Caco-2 (cell line): ENCODE measurements at regions of chr20 and their contacts with region 1.

Region 1: GRCh38 chr20:35269055-35269781 is 8.7 kb downstream of the MMP24OS start:
- DNase-seq: peak; percentile 88 to 93
- H3K4me3 ChIP-seq: no peak overlapping the region
- H3K4me3 Mint-ChIP-seq: no peak overlapping the region
- H3K27ac Mint-ChIP-seq: peak overlapping the region; percentile 38
- H3K4me1 ChIP-seq: peaks cover 19% of the 10 kb centered on the region
- H3K4me1 Mint-ChIP-seq: peaks cover 21% of the 10 kb centered on the region
- H3K27me3 ChIP-seq: no peaks in the 10 kb centered on the region
- H3K27me3 Mint-ChIP-seq: no peaks in the 10 kb centered on the region
- CTCF ChIP-seq: peak; percentile 97 to 99

Region 2: GRCh38 chr20:34834459-34834893 is 434.7 kb before region 1 on chr20:
- CTCF ChIA-PET with region 1: interaction called, 4 read pairs
- POLR2A ChIA-PET with region 1: no interaction called
- intact Hi-C with region 1: loop called (anchors 5 kb)
- DNase-seq: peak in 1 of 2 experiments; percentile 40
- H3K4me3 ChIP-seq: no peak overlapping the region
- H3K4me3 Mint-ChIP-seq: no peak overlapping the region
- H3K27ac Mint-ChIP-seq: no peak overlapping the region
- H3K4me1 ChIP-seq: peaks cover 7% of the 10 kb centered on the region; the same call in 1 of the 2 replicates
- H3K4me1 Mint-ChIP-seq: no peaks in the 10 kb centered on the region
- H3K27me3 ChIP-seq: no peaks in the 10 kb centered on the region
- H3K27me3 Mint-ChIP-seq: peaks cover 9% of the 10 kb centered on the region
- CTCF ChIP-seq: peak; percentile 43 to 75

Region 3: DNA sequence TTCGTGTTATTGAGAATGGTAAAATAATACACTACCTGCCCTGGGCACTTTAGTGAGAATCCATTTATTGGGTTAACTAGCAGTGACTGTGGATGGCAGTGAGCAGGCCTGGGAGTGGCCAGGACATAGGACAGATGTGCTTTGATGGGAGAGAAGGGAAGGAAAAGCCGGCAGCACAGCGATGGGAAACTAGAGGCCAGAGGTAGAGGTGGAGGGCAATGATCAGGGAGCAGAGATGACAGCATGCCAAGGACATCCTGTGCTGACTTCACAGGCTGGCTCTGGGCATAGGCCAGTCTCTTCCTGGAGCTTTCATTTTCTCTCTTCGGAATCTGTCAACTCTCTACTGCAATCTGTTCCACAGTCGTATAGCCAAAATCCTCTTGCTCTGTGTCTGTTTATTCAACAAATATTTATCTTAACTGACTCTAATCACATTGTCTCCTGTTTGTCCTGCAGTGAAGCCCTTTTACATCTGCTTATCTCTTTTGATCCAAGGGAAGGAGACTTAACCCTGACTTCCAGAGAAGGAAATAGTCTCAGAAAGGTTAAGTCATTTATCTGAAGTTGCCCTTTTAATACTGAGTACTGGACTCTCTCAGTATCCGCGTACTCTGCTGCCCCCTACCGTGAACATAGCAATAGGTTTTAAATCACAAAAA is 61.1 kb before region 1 on chr20:
- CTCF ChIA-PET with region 1: interaction called, 32 read pairs
- POLR2A ChIA-PET with region 1: interaction called, 3 read pairs
- intact Hi-C with region 1: loop called (anchors 1 kb)
- DNase-seq: peak; percentile 93 to 96
- H3K4me3 ChIP-seq: no peak overlapping the region; the same call in 1 of the 2 replicates
- H3K4me3 Mint-ChIP-seq: no peak overlapping the region
- H3K27ac Mint-ChIP-seq: no peak overlapping the region
- H3K4me1 ChIP-seq: peaks cover 21% of the 10 kb centered on the region; the same call in 1 of the 2 replicates
- H3K4me1 Mint-ChIP-seq: peaks cover 5% of the 10 kb centered on the region
- H3K27me3 ChIP-seq: no peaks in the 10 kb centered on the region
- H3K27me3 Mint-ChIP-seq: no peaks in the 10 kb centered on the region
- CTCF ChIP-seq: peak; percentile 92 to 98

Region 4: GRCh38 chr20:35226775-35227681 is 42.2 kb before region 1 on chr20:
- CTCF ChIA-PET with region 1: interaction called, 37 read pairs
- POLR2A ChIA-PET with region 1: interaction called, 4 read pairs
- intact Hi-C with region 1: no loop called
- DNase-seq: peak; percentile 86 to 96
- H3K4me3 ChIP-seq: peak overlapping the region; percentile 45
- H3K4me3 Mint-ChIP-seq: peak overlapping the region; percentile 70
- H3K27ac Mint-ChIP-seq: no peak overlapping the region
- H3K4me1 ChIP-seq: peaks cover 12% of the 10 kb centered on the region
- H3K4me1 Mint-ChIP-seq: no peaks in the 10 kb centered on the region
- H3K27me3 ChIP-seq: peaks cover 4% of the 10 kb centered on the region; the same call in 1 of the 2 replicates
- H3K27me3 Mint-ChIP-seq: peaks cover 15% of the 10 kb centered on the region
- CTCF ChIP-seq: no peak

Region 5: GRCh38 chr20:35297155-35297554 is 27.9 kb after region 1 on chr20:
- CTCF ChIA-PET with region 1: no interaction called
- POLR2A ChIA-PET with region 1: no interaction called
- intact Hi-C with region 1: no loop called
- DNase-seq: peak; percentile 54 to 64
- H3K4me3 ChIP-seq: no peak overlapping the region
- H3K4me3 Mint-ChIP-seq: no peak overlapping the region
- H3K27ac Mint-ChIP-seq: no peak overlapping the region
- H3K4me1 ChIP-seq: peaks cover 12% of the 10 kb centered on the region
- H3K4me1 Mint-ChIP-seq: peaks cover 17% of the 10 kb centered on the region
- H3K27me3 ChIP-seq: no peaks in the 10 kb centered on the region
- H3K27me3 Mint-ChIP-seq: no peaks in the 10 kb centered on the region
- CTCF ChIP-seq: peak; percentile 26 to 32

Region 6: DNA sequence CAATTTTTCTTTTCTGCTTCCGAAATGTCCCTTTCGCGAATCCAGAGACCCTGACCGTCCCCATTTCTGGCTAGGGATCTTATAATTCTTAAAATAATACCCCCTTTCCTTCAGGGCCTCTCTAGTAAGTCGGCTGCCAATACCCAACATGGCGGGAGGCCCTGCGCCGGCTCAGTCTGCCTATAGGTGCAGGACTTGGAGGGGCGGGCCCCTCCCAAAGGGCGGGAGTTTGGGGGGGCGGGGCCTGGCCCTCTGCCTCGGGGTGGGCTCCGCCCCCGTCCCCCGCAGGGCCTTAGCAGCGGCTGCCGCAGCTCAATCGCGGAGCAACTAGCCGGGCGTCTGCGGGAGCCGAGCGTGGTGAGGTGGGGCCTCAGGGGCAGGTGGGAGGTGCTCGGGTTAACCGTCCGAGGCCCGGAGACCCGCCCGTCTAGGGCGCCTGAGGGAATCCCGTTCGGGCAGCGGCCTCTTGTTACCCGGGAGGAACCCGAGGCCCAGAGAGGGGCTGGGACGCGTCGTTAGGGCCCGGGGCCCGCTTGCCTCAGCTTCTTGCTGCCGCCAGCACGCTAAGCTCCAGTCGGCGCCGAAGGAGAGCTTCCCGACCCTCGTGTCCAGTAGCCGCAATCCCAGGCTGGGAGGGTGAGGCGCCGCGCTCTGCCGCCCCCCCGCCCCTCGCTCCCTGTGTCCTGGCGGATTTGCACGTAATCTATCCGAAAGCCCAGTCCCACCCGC is 185.8 kb after region 1 on chr20 and contains the start of gene CEP250:
- CTCF ChIA-PET with region 1: interaction called, 6 read pairs
- POLR2A ChIA-PET with region 1: interaction called, 10 read pairs
- intact Hi-C with region 1: no loop called
- DNase-seq: peak; percentile 100
- H3K4me3 ChIP-seq: peak within 1 kb of the TSS; percentile 50
- H3K4me3 Mint-ChIP-seq: peak within 1 kb of the TSS; percentile 93
- H3K27ac Mint-ChIP-seq: peak within 1 kb of the TSS; percentile 100
- H3K4me1 ChIP-seq: peaks cover 5% of the 10 kb centered on the region
- H3K4me1 Mint-ChIP-seq: peaks cover 29% of the 10 kb centered on the region
- H3K27me3 ChIP-seq: no peaks in the 10 kb centered on the region
- H3K27me3 Mint-ChIP-seq: no peaks in the 10 kb centered on the region
- CTCF ChIP-seq: no peak
- total RNA-seq, gene CEP250: 117 and 137 TPM in 2 replicates